Activated CD4-positive, alpha-beta T cell treated with anti-CD3 and anti-CD28 coated beads for 36 hours (primary cell): ENCODE measurements at regions of chr9 and their contacts with region 1.

Region 1: DNA sequence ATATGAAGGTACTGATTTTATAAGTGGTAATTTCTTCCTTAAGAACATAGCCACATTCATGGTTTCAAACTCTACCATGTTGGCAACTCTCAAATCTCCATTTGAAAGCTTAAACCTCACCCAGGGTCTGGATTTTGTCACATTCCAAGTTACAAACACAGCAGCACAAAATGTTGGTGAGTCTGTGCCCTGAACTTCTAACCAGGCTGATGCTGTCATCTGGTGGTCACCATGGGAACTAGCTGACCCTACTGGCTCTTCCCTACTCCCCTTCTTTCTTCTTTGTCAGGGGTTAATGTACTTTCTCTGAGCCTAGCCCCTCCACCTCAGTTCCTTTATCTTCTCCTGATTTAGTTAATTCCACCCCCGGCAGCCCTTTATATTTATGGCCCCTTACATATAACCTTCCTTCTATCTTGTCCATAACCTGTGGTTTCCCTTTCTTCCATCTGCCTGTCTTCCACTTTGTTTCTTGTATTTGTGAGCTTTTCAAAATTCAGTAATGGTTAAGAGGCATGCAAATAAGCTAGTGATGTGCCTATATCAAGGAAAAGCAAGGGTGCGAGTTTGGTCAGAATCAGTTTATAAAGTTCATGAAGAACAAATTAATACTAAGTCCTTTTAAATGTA is 35.9 kb downstream of the TGFBR1 start:
- DNase-seq: peak; percentile 64
- ATAC-seq: peak; percentile 74
- H3K4me3 Mint-ChIP-seq: no peak overlapping the region
- H3K27ac Mint-ChIP-seq: no peak overlapping the region
- H3K4me1 Mint-ChIP-seq: peaks cover 31% of the 10 kb centered on the region
- H3K27me3 Mint-ChIP-seq: no peaks in the 10 kb centered on the region

Region 2: DNA sequence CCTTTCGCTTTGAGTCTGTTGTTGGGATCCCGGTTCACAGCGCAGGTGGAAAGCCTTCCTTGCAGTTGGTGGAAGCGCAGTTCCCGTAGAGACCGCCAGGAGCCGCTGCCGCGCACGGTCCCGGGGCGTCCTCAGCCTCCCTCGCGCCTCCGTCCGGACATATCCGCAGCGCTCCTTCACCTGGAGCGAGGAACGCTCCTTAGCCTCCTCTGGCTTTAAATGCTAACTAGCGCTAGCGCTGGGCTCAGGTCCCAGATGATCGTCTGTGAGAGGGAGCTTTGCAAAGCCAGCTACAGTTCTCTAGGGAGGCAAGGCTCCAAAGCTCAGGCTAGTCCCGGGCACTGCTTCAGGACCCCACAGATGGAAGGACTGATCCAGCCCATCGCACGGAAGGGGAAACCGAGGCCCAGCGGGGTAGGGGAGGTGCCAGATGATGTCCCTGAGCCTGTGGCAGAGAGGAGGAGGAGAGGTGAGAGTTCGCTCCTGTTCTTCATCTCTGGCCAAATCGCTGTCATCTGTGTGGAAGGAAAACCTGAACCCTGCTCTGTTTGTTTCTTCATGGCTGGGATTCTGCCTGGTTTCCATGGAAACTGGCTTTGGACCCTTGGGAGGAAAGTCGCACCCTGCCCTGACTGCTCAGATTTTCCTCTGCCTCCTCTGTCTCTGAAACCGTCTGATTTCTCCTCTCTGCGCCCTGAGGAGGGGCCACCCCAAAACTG is 165.6 kb before region 1 on chr9:
- CTCF ChIA-PET with region 1: interaction called, 62 read pairs
- POLR2A ChIA-PET with region 1: no interaction called
- intact Hi-C with region 1: loop called (anchors 1 kb)
- DNase-seq: peak; percentile 89
- ATAC-seq: peak; percentile 99
- H3K4me3 Mint-ChIP-seq: no peak overlapping the region
- H3K27ac Mint-ChIP-seq: no peak overlapping the region
- H3K4me1 Mint-ChIP-seq: peaks cover 5% of the 10 kb centered on the region
- H3K27me3 Mint-ChIP-seq: peaks cover 15% of the 10 kb centered on the region

Region 3: DNA sequence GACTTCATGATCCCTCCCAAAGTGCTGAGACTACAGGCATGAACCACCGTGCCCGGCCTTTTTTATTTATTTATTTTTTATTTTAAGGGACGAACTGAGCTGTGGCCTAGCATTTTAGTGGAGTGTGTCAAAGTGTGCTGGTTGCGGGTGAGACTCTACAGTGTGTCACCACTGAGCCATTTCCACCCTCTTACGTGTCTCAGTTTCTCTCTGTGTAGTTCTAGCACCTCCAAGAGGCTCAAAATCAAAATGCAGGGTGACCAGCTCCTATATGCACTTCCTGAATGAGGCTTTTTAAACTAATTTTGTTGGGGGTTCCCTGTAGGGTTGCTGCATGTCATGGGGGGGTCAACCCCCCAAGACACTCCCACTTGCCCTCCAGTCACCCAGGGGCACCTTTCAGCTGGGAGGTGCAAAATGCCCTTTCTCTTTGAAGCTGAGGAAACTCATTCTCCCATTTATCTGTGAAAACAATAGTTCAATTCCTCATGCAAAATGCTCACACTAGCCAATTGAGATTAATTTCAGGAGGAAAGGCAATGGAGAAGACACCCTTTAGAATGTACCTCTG is 127.8 kb before region 1 on chr9:
- CTCF ChIA-PET with region 1: interaction called, 31 read pairs
- POLR2A ChIA-PET with region 1: no interaction called
- intact Hi-C with region 1: no loop called
- DNase-seq: peak; percentile 32
- ATAC-seq: peak; percentile 90
- H3K4me3 Mint-ChIP-seq: no peak overlapping the region
- H3K27ac Mint-ChIP-seq: peak overlapping the region; percentile 86
- H3K4me1 Mint-ChIP-seq: peaks cover 20% of the 10 kb centered on the region
- H3K27me3 Mint-ChIP-seq: no peaks in the 10 kb centered on the region

Region 4: DNA sequence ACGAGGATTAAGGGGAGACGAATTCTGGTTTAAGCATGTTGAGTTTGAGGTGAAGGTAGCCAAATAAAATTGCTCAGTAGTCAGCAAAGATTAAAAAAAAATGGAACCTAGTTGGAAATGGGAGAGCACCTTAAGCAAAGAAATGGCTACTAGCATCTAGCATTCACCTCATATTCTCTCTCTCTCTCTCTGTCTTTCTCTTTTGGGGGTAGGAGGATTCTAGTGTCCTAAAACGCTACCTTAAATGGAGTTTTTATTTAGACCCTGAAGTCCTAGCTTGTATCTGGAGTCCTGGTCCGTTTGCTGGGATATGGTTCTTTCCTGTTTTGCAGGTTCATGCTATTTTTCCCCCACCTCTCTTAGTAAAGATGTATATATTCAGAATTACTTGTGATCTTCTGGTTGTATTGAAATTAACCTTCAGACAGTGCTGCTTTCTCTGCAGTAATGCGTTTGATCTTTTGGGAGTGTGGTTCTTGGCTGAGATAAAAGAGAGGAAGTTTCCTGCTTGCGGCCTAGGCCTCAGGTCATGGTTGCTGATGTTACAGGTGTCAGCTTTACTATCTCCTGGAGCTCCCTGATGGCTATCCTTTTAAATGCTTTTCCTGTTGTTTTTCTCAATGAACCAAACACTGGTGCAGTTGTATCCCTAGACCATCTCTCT is 27.9 kb before region 1 on chr9:
- CTCF ChIA-PET with region 1: interaction called, 23 read pairs
- POLR2A ChIA-PET with region 1: interaction called, 3 read pairs
- intact Hi-C with region 1: no loop called
- DNase-seq: peak; percentile 40
- ATAC-seq: peak; percentile 87
- H3K4me3 Mint-ChIP-seq: peak overlapping the region; percentile 57
- H3K27ac Mint-ChIP-seq: peak overlapping the region; percentile 75
- H3K4me1 Mint-ChIP-seq: peaks cover 80% of the 10 kb centered on the region
- H3K27me3 Mint-ChIP-seq: no peaks in the 10 kb centered on the region

Region 5: GRCh38 chr9:99563364-99563763 is 422.6 kb after region 1 on chr9:
- CTCF ChIA-PET with region 1: no interaction called
- POLR2A ChIA-PET with region 1: no interaction called
- intact Hi-C with region 1: no loop called
- DNase-seq: no peak
- ATAC-seq: no peak
- H3K4me3 Mint-ChIP-seq: no peak overlapping the region
- H3K27ac Mint-ChIP-seq: no peak overlapping the region
- H3K4me1 Mint-ChIP-seq: no peaks in the 10 kb centered on the region
- H3K27me3 Mint-ChIP-seq: peaks cover 10% of the 10 kb centered on the region